Activated T-helper 1 cell treated with anti-CD3 and anti-CD28 coated beads, Interleukin-12 subunit alpha, Interleukin-12 subunit beta, Interleukin-2, Interleukin-4 antibody, amounts not matched to agents 30 ng/mL and 10 ng/mL and 1 ng/mL, durations not matched to agents 14 hours and 24 hours and 36 hours (primary cell): ENCODE measurements at regions of chr1 and their contacts with region 1.

Region 1: DNA sequence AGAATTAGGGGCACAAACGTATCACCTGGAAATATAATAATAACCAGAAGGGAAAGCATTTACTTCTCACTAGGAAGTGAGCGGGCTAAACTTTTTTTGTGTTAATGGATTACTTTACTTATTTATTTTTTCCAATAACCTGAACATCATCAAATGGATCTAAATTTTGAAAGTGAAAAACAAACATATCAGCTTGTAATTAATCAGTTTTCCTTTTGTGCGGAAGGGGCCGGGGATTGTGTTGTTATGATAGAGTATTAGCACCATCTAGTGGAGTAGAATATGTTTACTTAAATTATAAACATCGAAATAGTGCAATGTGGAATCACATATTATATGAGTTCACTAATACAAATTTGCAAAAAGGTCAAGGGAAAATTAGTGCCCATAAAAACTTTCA is 9.0 kb downstream of the CFH start:
- DNase-seq: no peak
- H3K4me3 Mint-ChIP-seq: no peak overlapping the region
- H3K27ac Mint-ChIP-seq: no peak overlapping the region
- H3K4me1 Mint-ChIP-seq: no peaks in the 10 kb centered on the region
- H3K27me3 Mint-ChIP-seq: peaks cover 2% of the 10 kb centered on the region

Region 2: GRCh38 chr1:196148367-196148970 is 512.4 kb before region 1 on chr1:
- intact Hi-C with region 1: loop called (anchors 1 kb)
- DNase-seq: no peak
- H3K4me3 Mint-ChIP-seq: no peak overlapping the region
- H3K27ac Mint-ChIP-seq: no peak overlapping the region
- H3K4me1 Mint-ChIP-seq: no peaks in the 10 kb centered on the region
- H3K27me3 Mint-ChIP-seq: no peaks in the 10 kb centered on the region

Region 3: DNA sequence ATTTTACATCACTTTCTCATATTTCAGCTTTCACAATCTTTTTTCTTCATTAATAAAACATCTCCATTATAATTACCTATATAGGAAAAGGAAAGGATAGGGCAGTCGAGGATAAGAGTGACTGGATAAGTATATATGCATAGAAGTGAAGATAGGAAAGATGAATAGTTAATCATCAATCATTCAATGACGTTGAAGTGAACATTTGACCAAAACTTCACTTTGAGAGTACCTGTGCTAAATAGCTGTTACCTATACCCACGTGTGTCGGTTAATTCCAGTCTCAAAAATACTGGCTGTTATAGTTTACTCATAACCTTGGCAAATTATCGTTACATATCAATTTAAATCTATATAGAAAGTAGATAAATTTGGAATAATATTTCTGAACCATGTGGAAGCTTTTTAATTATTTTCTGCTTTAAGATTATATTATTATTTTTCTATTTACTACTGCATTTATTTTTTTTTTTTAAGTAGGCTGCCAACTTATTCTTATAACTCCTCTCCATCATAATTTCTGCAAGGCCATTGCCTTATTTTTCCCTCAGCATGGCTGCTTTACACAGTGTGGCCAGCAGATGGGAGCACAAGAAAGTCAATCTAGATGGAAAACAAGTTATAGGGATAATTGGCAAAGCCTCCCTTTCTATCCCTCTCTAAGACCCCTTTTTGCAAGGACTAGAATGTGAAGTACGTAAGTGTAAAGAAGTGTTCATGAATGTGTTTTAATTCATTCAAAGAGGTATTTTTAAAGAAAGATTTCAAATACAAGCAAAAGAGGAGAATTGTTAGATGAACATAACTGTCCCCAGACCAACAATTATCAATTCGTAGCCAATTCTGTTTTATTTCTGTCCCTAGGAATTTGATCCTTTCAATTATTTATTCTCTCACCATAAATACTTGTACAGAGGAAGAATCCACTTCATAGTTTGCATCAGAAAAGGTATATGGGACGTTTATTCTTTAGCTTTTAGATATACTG is 343.0 kb before region 1 on chr1:
- intact Hi-C with region 1: loop called (anchors 2 kb)
- DNase-seq: no peak
- H3K4me3 Mint-ChIP-seq: no peak overlapping the region
- H3K27ac Mint-ChIP-seq: no peak overlapping the region
- H3K4me1 Mint-ChIP-seq: no peaks in the 10 kb centered on the region
- H3K27me3 Mint-ChIP-seq: no peaks in the 10 kb centered on the region

Region 4: DNA sequence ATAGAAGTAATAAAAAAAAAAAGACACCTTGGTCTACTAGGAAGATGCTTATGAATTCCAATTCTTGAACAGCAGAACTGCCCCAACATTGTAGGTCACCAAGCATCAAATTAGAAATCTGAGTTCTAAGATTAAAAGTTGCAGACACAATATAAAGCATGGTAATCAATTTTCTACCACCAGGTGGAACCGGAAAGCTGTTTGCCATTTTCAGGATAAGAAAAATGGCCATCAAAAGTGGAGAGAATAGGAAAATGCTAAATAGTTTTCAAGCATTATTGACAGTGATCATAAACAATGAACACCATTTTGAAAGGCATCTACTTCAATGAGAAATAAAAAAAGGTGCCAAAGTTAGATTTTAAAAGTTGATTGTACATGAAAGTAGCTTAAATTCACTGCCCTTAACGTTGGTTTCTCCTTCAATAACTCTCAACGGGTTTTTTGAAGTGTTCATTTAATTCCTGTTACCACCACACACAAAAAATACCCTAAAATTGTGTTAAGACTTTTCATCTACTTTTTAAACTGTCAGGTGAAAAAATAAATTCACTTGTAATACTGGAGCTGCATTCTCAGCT is 305.6 kb before region 1 on chr1:
- intact Hi-C with region 1: loop called (anchors 1 kb)
- DNase-seq: no peak
- H3K4me3 Mint-ChIP-seq: no peak overlapping the region
- H3K27ac Mint-ChIP-seq: no peak overlapping the region
- H3K4me1 Mint-ChIP-seq: no peaks in the 10 kb centered on the region
- H3K27me3 Mint-ChIP-seq: peaks cover 3% of the 10 kb centered on the region